ENCODE measurements at regions of chr4 and their contacts with region 1.

Region 1: DNA sequence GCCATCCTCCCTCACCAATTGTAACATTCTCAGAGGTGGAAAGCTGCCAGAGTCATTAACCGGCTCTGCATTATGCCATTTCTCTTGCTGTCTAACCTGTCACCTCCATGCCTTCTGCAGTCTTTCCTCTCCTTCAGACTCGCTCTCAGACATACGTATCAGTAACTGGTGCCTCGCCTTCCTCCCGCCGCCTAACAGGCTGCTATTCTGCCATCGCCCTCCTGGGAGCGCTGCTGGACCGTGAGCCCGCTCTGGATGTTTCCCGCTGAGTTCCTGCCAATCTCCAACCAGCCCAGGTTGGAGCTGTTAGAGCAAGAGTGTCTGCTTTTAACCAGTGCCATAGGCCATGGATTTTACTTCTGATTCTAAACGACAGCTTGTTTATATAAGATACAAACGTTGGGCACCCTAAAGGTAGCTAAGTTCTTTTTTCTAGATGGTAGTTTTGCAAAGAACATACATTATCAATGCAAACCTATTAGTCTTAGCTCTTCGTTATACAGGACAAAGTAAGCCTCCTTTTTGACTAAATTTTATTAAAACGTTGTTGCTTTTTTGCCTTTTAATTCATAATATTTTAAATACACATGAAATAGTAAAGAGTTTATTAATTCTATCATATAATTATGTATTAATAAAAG is 59.5 kb upstream of the NEIL3 start:
- DNase-seq: peak; percentile 83
- ATAC-seq: peak; percentile 87
- H3K4me3 Mint-ChIP-seq: no peak overlapping the region
- H3K27ac Mint-ChIP-seq: no peak overlapping the region
- H3K4me1 Mint-ChIP-seq: peaks cover 8% of the 10 kb centered on the region
- H3K27me3 Mint-ChIP-seq: peaks cover 11% of the 10 kb centered on the region

Region 2: DNA sequence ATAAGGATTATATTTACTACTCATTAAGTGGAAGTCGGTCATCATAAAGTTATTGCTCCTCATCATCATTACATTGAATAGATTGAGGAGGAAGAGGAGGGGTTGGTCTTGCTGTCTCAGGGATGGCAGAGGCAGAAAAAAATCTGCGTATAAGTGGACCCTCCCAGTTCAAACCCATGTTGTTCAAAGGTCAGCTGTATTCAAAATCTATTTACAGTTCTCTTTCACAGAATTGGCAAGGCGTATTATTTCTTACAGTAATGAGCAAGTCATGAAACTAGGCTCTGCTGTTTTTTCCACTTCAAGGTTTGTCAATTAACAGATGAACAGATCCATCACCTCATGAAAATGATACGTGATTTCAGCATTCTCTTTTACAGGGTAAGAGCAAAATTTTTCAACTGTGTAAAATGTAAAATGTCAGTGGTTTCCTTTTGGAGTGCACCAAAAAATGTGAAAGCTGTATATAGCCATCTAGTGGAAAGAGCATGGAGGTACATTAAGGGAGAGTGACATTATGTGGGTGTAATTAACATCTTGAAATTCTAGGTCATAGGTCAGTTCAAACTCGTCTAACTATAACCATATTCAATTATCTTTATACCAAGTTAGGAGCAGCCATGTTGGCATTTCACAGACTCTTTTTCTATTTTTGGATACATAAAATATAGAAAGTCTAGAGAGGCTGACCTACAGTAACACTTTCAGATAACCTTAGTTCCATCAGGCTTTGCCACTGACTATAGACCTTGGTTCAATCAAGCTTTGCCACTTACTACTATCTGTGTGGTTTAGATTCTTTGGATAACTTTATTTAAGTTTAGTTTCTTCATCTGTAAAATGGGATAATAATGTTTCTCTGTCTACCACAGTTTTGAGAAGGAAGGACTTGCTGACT is 89.5 kb after region 1 on chr4:
- CTCF ChIA-PET with region 1: interaction called, 45 read pairs
- POLR2A ChIA-PET with region 1: no interaction called
- intact Hi-C with region 1: loop called (anchors 1 kb)
- DNase-seq: no peak
- ATAC-seq: peak; percentile 83
- H3K4me3 Mint-ChIP-seq: no peak overlapping the region
- H3K27ac Mint-ChIP-seq: no peak overlapping the region
- H3K4me1 Mint-ChIP-seq: peaks cover 9% of the 10 kb centered on the region
- H3K27me3 Mint-ChIP-seq: no peaks in the 10 kb centered on the region

Region 3: GRCh38 chr4:177441803-177442622 is 191.8 kb after region 1 on chr4 and contains the start of gene AGA:
- CTCF ChIA-PET with region 1: interaction called, 8 read pairs
- POLR2A ChIA-PET with region 1: interaction called, 4 read pairs
- intact Hi-C with region 1: loop called in 1 of 2 experiments (anchors 5 kb)
- DNase-seq: peak; percentile 98
- ATAC-seq: peak; percentile 91
- H3K4me3 Mint-ChIP-seq: peak within 1 kb of the TSS; percentile 97
- H3K27ac Mint-ChIP-seq: peak within 1 kb of the TSS; percentile 100
- H3K4me1 Mint-ChIP-seq: peaks cover 24% of the 10 kb centered on the region
- H3K27me3 Mint-ChIP-seq: no peaks in the 10 kb centered on the region
- total RNA-seq, gene AGA: 20.8 to 27.7 TPM

Region 4: GRCh38 chr4:177546745-177547144 is 296.6 kb after region 1 on chr4:
- CTCF ChIA-PET with region 1: no interaction called
- POLR2A ChIA-PET with region 1: no interaction called
- intact Hi-C with region 1: loop called (anchors 2 to 5 kb)
- DNase-seq: no peak
- ATAC-seq: no peak
- H3K4me3 Mint-ChIP-seq: no peak overlapping the region
- H3K27ac Mint-ChIP-seq: no peak overlapping the region
- H3K4me1 Mint-ChIP-seq: no peaks in the 10 kb centered on the region
- H3K27me3 Mint-ChIP-seq: no peaks in the 10 kb centered on the region

Measured in activated CD4-positive, alpha-beta T cell treated with anti-CD3 and anti-CD28 coated beads for 36 hours (primary cell).